Right cardiac atrium (tissue), 5 donors: ENCODE measurements at regions of chr1 and their contacts with region 1.

Region 1: DNA sequence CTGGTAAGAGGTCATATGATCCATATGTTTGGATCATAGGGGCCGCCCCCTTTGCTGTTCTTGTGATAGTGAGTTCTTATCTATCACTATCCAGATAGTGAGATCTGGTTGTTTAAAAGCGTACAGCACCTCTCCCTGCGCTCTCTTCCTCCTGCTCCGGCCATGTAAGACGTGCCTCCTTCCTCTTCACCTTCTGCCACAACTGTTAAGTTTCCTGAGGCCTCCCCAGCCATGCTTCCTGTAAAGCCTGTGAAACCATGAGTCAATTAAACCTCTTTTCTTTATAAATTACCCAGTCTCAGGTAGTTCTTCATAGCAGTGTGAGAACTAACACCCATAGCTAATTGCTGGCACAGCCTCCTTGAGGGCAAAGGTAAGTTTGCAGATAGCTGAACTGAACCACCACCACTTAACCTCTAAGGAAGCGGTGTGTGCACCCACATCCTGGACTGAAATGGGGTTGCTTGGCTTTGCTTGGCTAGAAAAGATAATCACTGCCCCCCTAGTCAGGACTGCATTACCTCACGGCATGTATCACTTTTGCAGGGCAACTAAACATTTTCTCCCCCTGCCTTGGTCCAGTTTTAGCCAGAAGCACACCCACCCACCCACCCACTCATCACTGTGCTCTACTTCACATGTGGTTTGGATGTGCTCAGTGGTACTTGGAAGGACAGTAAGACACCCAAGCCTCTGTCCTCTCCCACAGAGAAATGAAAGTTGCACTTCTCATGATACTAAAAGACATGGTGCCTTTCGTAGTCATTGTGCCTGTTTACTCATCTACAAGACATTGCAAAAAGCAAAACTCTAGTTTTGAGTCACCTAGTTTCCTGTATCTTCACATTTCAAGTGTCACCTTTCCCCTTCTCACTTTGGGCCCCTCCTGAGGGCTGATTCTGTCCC is 23.1 kb upstream of the PTAFR start:
- DNase-seq: no peak
- ATAC-seq: no peak
- H3K4me3 ChIP-seq: no peak overlapping the region
- H3K27ac ChIP-seq: no peak overlapping the region
- H3K4me1 ChIP-seq: no peaks in the 10 kb centered on the region
- H3K27me3 ChIP-seq: no peaks in the 10 kb centered on the region

Region 2: GRCh38 chr1:28091043-28091781 is 108.4 kb before region 1 on chr1:
- intact Hi-C with region 1: loop called in 1 of 4 experiments (anchors 10 kb)
- DNase-seq: peak; percentile 61 to 88 (median 66)
- ATAC-seq: no peak
- H3K4me3 ChIP-seq: no peak overlapping the region
- H3K27ac ChIP-seq: no peak overlapping the region
- H3K4me1 ChIP-seq: peaks cover 5% of the 10 kb centered on the region
- H3K27me3 ChIP-seq: no peaks in the 10 kb centered on the region

Region 3: GRCh38 chr1:28296401-28297261 is 97.0 kb after region 1 on chr1:
- intact Hi-C with region 1: no loop called
- DNase-seq: peak in 1 of 3 donors; percentile 67
- ATAC-seq: peak; percentile 42 to 54
- H3K4me3 ChIP-seq: no peak overlapping the region
- H3K27ac ChIP-seq: no peak overlapping the region
- H3K4me1 ChIP-seq: no peaks in the 10 kb centered on the region
- H3K27me3 ChIP-seq: no peaks in the 10 kb centered on the region

Region 4: DNA sequence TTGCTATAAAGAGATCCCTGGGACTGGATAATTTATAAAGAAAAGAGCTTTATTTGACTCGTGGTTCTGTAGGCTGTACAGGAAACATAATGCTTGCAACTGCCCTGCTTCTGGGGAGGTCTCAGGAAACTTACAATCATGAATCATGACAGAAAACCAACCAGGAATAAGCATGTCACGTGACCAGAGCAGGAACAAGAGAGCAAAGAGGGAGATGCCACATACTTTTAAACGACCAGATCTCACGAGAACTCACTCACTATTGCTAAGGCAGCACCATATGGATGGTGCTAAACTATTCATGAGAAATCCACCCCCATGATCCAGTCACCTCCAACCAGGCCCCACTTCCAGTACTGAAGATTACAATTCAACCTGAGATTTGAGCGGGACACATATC is 256.5 kb after region 1 on chr1:
- intact Hi-C with region 1: loop called in 1 of 4 experiments (anchors 5 kb)
- DNase-seq: no peak
- ATAC-seq: peak in 1 of 2 donors; percentile 55
- H3K4me3 ChIP-seq: no peak overlapping the region
- H3K27ac ChIP-seq: peak overlapping the region; percentile 75
- H3K4me1 ChIP-seq: peaks cover 13% of the 10 kb centered on the region
- H3K27me3 ChIP-seq: no peaks in the 10 kb centered on the region